PC-3 (cell line): ENCODE measurements at regions of chr1 and their contacts with region 1.

Region 1: DNA sequence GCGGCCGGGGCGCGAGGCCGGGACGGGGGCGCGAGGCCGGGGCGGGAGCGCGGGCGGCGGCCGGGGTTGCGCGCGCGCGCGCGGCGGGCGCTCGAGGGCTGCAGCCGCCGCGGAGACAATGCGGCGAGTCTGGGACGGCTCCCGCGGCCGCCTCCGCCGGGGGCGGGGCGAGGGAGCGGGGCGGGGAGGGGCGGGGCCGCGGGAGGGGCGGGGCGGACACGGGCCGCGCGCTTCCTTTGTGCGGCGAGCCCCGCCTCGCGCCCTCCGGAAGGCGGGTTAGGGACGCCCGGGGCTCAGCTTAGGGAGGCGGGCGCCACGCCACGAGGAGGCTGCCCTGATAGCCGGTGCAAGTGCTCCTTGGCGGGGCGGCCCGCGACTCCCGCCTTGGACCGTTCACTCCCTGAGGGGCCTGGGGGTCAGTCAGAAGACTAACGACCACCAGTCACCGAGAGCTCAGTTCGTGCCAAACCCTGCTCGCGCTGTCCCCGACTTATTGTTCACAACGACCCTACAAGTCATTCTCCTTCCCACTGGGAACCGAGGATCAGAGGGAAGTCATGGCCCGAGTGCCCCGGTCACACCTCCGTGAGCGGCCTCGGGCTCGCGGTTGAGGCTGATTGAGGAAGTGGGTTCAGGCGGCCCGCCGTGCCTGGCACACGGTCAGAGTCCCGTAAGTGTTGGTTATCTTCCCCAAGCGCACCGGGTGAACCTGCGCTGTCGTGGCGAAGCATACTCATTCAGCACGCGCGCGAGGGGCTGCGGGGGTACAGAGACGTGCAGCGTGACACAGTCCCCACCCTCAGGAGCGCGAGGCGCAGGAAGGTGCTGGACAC is 29.1 kb upstream of the A3GALT2 start:
- DNase-seq: peak; percentile 87
- ATAC-seq: peak; percentile 61
- H3K4me3 ChIP-seq: peak overlapping the region; percentile 73
- H3K27ac ChIP-seq: peak overlapping the region; percentile 80
- H3K4me1 ChIP-seq: peaks cover 50% of the 10 kb centered on the region
- H3K27me3 ChIP-seq: no peaks in the 10 kb centered on the region
- CTCF ChIP-seq: no peak

Region 2: GRCh38 chr1:33295450-33296081 is 54.4 kb before region 1 on chr1:
- CTCF ChIA-PET with region 1: no interaction called
- POLR2A ChIA-PET with region 1: no interaction called
- intact Hi-C with region 1: no loop called
- DNase-seq: peak; percentile 93
- ATAC-seq: peak; percentile 87
- H3K4me3 ChIP-seq: no peak overlapping the region
- H3K27ac ChIP-seq: no peak overlapping the region
- H3K4me1 ChIP-seq: no peaks in the 10 kb centered on the region
- H3K27me3 ChIP-seq: no peaks in the 10 kb centered on the region
- CTCF ChIP-seq: peak; percentile 98

Region 3: GRCh38 chr1:33616773-33617172 is 266.8 kb after region 1 on chr1:
- CTCF ChIA-PET with region 1: interaction called, 12 read pairs
- POLR2A ChIA-PET with region 1: no interaction called
- intact Hi-C with region 1: no loop called
- DNase-seq: no peak
- ATAC-seq: no peak
- H3K4me3 ChIP-seq: no peak overlapping the region
- H3K27ac ChIP-seq: no peak overlapping the region
- H3K4me1 ChIP-seq: no peaks in the 10 kb centered on the region
- H3K27me3 ChIP-seq: peaks cover 81% of the 10 kb centered on the region
- CTCF ChIP-seq: no peak